ENCODE measurements at regions of chr21 and their contacts with region 1.

Region 1: GRCh38 chr21:38805328-38806152 is at the start of gene ETS2:
- DNase-seq: peak; percentile 91 to 94
- ATAC-seq: peak; percentile 88 to 94 (median 92)
- H3K4me3 ChIP-seq: peak within 1 kb of the TSS; percentile 68 to 100 (median 92)
- H3K27ac ChIP-seq: peak within 1 kb of the TSS; percentile 91 to 99 (median 98)
- H3K4me1 ChIP-seq: peaks cover 0 to 39% (median 16%) of the 10 kb centered on the region in 9 donors
- H3K27me3 ChIP-seq: no peaks in the 10 kb centered on the region
- CTCF ChIP-seq: peak in 2 of 9 donors; percentile 6 to 31
- total RNA-seq, gene ETS2: 27.5 to 81.5 (median 46.5) TPM

Region 2: GRCh38 chr21:38434913-38435533 is 370.5 kb before region 1 on chr21:
- intact Hi-C with region 1: no loop called
- DNase-seq: no peak
- ATAC-seq: peak in 4 of 8 donors; percentile 21 to 46 (median 28)
- H3K4me3 ChIP-seq: peak overlapping the region in 2 of 10 donors; percentile 13 to 26
- H3K27ac ChIP-seq: peak overlapping the region in 3 of 10 donors; percentile 2 to 39 (median 32)
- H3K4me1 ChIP-seq: peaks cover 0 to 51% (median 34%) of the 10 kb centered on the region in 9 donors
- H3K27me3 ChIP-seq: no peaks in the 10 kb centered on the region
- CTCF ChIP-seq: no peak

Region 3: GRCh38 chr21:38494703-38495102 is 310.8 kb before region 1 on chr21:
- intact Hi-C with region 1: loop called in 1 of 10 experiments (anchors 5 kb)
- DNase-seq: no peak
- ATAC-seq: peak in 4 of 8 donors; percentile 10 to 32 (median 18)
- H3K4me3 ChIP-seq: peak overlapping the region in 9 of 10 donors; percentile 18 to 64 (median 54)
- H3K27ac ChIP-seq: peak overlapping the region in 9 of 10 donors; percentile 13 to 95 (median 85)
- H3K4me1 ChIP-seq: peaks cover 0 to 58% (median 35%) of the 10 kb centered on the region in 9 donors
- H3K27me3 ChIP-seq: no peaks in the 10 kb centered on the region
- CTCF ChIP-seq: peak in 2 of 9 donors; percentile 5 to 16

Region 4: DNA sequence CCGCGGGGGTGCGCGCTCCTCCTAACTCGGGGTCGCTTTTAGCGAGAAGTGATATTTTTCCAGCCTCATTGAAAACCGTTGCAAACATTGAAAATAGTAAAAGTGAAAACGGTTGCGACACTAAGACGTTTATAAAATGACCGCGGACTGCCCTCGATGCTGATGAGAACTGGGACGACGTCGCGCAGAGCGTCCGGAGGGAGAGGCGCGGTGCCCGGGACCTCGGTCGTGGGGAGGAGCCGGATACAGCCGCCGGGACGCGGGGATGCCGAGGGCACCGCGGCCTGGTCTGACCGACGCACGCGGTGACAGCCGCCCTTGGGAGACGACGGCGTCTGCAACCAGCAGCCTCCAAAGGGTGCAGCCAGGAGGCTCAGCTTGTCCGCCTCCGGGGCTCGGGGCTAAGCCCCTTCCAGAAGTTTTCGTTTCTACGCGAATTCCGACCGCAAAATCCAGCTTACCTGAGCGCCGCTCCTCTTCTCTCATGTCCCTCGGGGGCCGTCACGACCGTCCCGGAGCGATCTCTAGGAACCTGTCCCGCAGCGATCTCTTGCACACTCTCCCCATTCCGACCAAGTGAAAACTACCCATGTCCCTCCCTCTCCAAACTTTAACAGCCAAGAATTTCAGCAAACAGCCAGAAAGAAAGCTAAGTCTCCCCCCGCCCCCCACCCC is 144.2 kb before region 1 on chr21:
- intact Hi-C with region 1: no loop called
- DNase-seq: peak; percentile 14 to 38
- ATAC-seq: peak in 7 of 8 donors; percentile 38 to 83 (median 75)
- H3K4me3 ChIP-seq: peak overlapping the region; percentile 44 to 64 (median 57)
- H3K27ac ChIP-seq: peak overlapping the region in 4 of 10 donors; percentile 15 to 41 (median 28)
- H3K4me1 ChIP-seq: peaks cover 0 to 17% (median 9%) of the 10 kb centered on the region in 9 donors
- H3K27me3 ChIP-seq: peaks cover 12 to 96% (median 49%) of the 10 kb centered on the region in 7 donors
- CTCF ChIP-seq: no peak

Region 5: GRCh38 chr21:38743761-38744529 is 61.6 kb before region 1 on chr21:
- intact Hi-C with region 1: loop called in 6 of 10 experiments (anchors 2 to 10 kb)
- DNase-seq: peak; percentile 27 to 44
- ATAC-seq: peak; percentile 58 to 92 (median 89)
- H3K4me3 ChIP-seq: peak overlapping the region in 2 of 10 donors; percentile 16 to 24
- H3K27ac ChIP-seq: peak overlapping the region in 7 of 10 donors; percentile 16 to 73 (median 36)
- H3K4me1 ChIP-seq: peaks cover 0 to 26% (median 3%) of the 10 kb centered on the region in 9 donors
- H3K27me3 ChIP-seq: no peaks in the 10 kb centered on the region
- CTCF ChIP-seq: no peak

Region 6: DNA sequence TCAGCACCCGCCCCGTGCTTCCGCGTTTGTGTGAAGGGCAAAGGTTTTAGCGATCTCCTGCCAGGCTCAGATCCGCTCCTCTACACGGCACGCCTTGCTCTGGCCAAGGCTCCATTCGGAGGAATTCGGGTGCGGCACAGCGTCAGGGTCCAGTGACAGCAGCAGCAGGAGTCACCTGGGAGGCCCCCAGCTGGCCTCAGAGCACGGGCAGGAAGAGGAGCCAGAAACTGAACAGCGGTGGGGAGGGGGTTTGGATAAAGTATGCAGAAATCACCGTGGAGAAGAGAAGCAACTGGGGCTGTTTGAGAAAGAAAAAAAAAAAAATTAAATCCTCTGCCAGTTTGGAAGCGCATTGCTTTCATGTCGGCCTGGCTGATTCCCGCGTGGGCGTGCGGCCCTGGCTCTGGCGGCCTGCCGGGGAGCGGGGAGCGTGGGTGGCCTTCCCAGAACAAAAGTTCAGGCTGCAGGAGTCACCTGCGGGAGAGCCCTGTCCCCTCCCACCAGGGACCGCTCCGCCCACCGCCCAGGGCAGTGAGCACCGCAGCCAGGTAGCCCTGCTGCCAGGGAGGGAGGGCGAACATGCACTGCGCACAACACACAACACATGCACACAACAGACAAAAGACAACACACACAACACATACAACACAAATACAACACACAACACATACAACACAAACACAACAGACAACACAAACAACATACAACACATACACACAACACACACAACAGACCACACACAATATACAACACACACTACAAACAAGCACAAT is 107.8 kb after region 1 on chr21:
- intact Hi-C with region 1: loop called in 4 of 10 experiments (anchors 2 to 5 kb)
- DNase-seq: peak; percentile 61 to 72
- ATAC-seq: peak; percentile 49 to 83 (median 77)
- H3K4me3 ChIP-seq: peak overlapping the region in 7 of 10 donors; percentile 5 to 36 (median 19)
- H3K27ac ChIP-seq: peak overlapping the region; percentile 4 to 92 (median 78)
- H3K4me1 ChIP-seq: peaks cover 12 to 70% (median 44%) of the 10 kb centered on the region in 9 donors
- H3K27me3 ChIP-seq: no peaks in the 10 kb centered on the region
- CTCF ChIP-seq: no peak

Region 7: DNA sequence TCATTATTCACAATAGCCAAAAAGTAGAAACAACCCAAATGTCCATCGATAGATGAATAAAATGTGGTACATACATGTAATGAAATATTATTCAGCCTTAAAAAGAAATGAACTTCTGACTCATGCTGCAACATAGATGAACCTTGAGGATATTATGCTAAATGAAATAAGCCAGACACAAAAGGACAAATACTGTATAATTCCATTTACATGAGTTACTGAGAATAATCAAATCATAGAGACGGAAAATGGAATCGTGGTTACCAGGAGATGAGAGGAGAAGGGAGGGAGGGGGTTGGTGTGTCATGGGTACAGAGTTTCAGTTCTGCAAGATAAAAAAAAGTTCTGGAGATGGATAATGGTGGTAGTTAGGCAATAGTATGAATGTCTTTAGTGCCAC is 193.6 kb after region 1 on chr21:
- intact Hi-C with region 1: loop called in 3 of 10 experiments (anchors 5 to 10 kb)
- DNase-seq: no peak
- ATAC-seq: no peak
- H3K4me3 ChIP-seq: no peak overlapping the region
- H3K27ac ChIP-seq: peak overlapping the region in 4 of 10 donors; percentile 66 to 96 (median 76)
- H3K4me1 ChIP-seq: peaks cover 12 to 98% (median 81%) of the 10 kb centered on the region in 9 donors
- H3K27me3 ChIP-seq: no peaks in the 10 kb centered on the region
- CTCF ChIP-seq: no peak

Region 8: DNA sequence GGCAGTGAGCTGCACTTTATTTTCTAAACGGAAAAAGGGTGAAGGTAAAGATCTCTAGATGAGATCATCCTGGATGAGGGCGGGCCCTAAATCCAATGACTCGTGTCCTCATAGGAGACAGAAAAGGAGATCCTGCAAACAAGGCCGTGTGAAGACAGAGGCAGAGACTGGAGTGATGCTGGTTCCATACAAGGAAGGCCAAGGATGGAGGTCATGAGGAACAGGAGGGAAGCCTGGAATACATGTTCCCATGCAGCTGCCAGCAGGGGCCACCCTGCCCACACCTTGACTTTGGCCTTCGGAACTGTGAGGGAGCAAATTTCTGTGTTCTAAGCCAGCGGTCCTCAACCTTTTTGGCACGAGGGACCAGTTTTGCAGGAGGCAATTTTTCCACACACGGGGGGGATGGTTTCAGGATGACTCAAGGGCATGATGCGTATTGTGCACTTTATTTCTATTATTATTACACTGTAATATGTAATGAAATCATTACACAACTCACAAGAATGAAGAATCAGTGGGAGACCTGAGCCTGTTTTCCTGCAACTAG is 283.4 kb after region 1 on chr21:
- intact Hi-C with region 1: loop called in 4 of 10 experiments (anchors 1 to 10 kb)
- DNase-seq: peak in 1 of 2 donors; percentile 47
- ATAC-seq: peak in 6 of 8 donors; percentile 34 to 58 (median 47)
- H3K4me3 ChIP-seq: no peak overlapping the region
- H3K27ac ChIP-seq: peak overlapping the region in 7 of 10 donors; percentile 88 to 98 (median 95)
- H3K4me1 ChIP-seq: peaks cover 2 to 59% (median 33%) of the 10 kb centered on the region in 9 donors
- H3K27me3 ChIP-seq: no peaks in the 10 kb centered on the region
- CTCF ChIP-seq: peak in 6 of 9 donors; percentile 10 to 43 (median 28)

Region 9: DNA sequence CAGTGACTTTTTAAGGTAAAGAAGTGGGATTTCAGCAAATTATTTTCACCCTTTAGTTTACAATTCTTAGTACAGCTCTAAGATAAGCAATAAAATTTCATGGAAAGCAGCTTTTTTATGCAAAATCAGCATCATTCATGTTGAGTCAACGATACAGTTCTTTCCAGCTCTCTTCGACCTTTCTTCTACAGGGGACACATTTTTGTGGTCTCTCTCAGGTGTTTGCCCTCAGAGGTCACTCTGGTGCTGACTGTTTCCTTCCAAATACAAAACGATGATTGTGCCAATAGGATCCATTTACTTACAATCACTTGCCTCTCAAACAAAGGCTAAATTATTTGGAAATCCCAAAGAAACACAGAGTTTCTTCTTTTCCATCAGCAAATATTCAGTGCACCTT is 326.7 kb after region 1 on chr21:
- intact Hi-C with region 1: loop called in 7 of 10 experiments (anchors 2 to 5 kb)
- DNase-seq: no peak
- ATAC-seq: no peak
- H3K4me3 ChIP-seq: no peak overlapping the region
- H3K27ac ChIP-seq: no peak overlapping the region
- H3K4me1 ChIP-seq: peaks cover 0 to 8% (median 0%) of the 10 kb centered on the region in 9 donors
- H3K27me3 ChIP-seq: no peaks in the 10 kb centered on the region
- CTCF ChIP-seq: no peak

Measured in heart right ventricle (tissue), 16 donors.